ENCODE measurements at regions of chr6 and their contacts with region 1.

Region 1: GRCh38 chr6:53437557-53438202 is 88.9 kb upstream of the ELOVL5 start:
- DNase-seq: peak; percentile 38 to 77 (median 73)
- H3K4me3 ChIP-seq: no peak overlapping the region
- H3K4me3 Mint-ChIP-seq: no peak overlapping the region
- H3K27ac ChIP-seq: peak overlapping the region in 1 of 2 donors; percentile 69
- H3K27ac Mint-ChIP-seq: peak overlapping the region; percentile 25 to 92 (median 53)
- H3K4me1 ChIP-seq: peaks cover 46 to 55% of the 10 kb centered on the region in 2 donors
- H3K4me1 Mint-ChIP-seq: peaks cover 52% of the 10 kb centered on the region
- H3K27me3 ChIP-seq: no peaks in the 10 kb centered on the region
- H3K27me3 Mint-ChIP-seq: peaks cover 0 to 1% (median 0%) of the 10 kb centered on the region in 3 donors
- CTCF ChIP-seq: peak; percentile 67

Region 2: DNA sequence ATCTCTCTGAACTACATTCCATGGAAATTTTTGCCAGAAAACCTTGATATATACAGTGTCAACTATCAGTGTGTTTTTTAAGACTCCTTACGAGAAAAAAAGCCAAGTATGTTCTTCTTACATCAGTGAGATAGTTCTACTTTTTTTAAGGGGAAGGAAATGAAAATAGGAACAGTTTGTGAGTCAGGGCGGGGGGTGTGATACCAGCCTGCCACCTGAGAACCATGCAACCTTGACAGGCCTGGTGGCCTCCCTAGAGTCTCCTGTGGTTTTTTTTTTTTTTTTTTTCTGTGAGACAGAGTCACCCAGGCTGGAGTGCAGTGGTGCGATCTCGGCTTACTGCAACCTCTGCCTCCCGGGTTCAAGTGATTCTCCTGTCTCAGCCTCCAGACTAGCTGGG is 192.7 kb before region 1 on chr6:
- intact Hi-C with region 1: loop called in 1 of 2 experiments (anchors 10 kb)
- DNase-seq: peak; percentile 84 to 88 (median 87)
- H3K4me3 ChIP-seq: peak overlapping the region in 1 of 3 experiments; percentile 44
- H3K4me3 Mint-ChIP-seq: peak overlapping the region in 1 of 2 donors; percentile 53
- H3K27ac ChIP-seq: peak overlapping the region; percentile 79 to 86
- H3K27ac Mint-ChIP-seq: peak overlapping the region; percentile 87 to 97 (median 94)
- H3K4me1 ChIP-seq: peaks cover 57 to 60% of the 10 kb centered on the region in 2 donors
- H3K4me1 Mint-ChIP-seq: peaks cover 72% of the 10 kb centered on the region
- H3K27me3 ChIP-seq: no peaks in the 10 kb centered on the region
- H3K27me3 Mint-ChIP-seq: peaks cover 0 to 2% (median 1%) of the 10 kb centered on the region in 3 donors
- CTCF ChIP-seq: no peak

Region 3: GRCh38 chr6:53359072-53359842 is 78.4 kb before region 1 on chr6:
- intact Hi-C with region 1: loop called (anchors 5 to 10 kb)
- DNase-seq: peak; percentile 88 to 95 (median 94)
- H3K4me3 ChIP-seq: peak overlapping the region; percentile 56 to 85 (median 70)
- H3K4me3 Mint-ChIP-seq: peak overlapping the region; percentile 90 to 96
- H3K27ac ChIP-seq: peak overlapping the region; percentile 82 to 93
- H3K27ac Mint-ChIP-seq: peak overlapping the region; percentile 93 to 98 (median 97)
- H3K4me1 ChIP-seq: peaks cover 17 to 22% of the 10 kb centered on the region in 2 donors
- H3K4me1 Mint-ChIP-seq: peaks cover 27% of the 10 kb centered on the region
- H3K27me3 ChIP-seq: no peaks in the 10 kb centered on the region
- H3K27me3 Mint-ChIP-seq: peaks cover 0 to 7% (median 7%) of the 10 kb centered on the region in 3 donors
- CTCF ChIP-seq: no peak

Region 4: GRCh38 chr6:53484476-53485280 is 47.0 kb after region 1 on chr6:
- intact Hi-C with region 1: loop called in 1 of 2 experiments (anchors 10 kb)
- DNase-seq: peak; percentile 60 to 77 (median 68)
- H3K4me3 ChIP-seq: no peak overlapping the region
- H3K4me3 Mint-ChIP-seq: peak overlapping the region in 1 of 2 donors; percentile 67
- H3K27ac ChIP-seq: no peak overlapping the region
- H3K27ac Mint-ChIP-seq: no peak overlapping the region
- H3K4me1 ChIP-seq: peaks cover 31 to 37% of the 10 kb centered on the region in 2 donors
- H3K4me1 Mint-ChIP-seq: peaks cover 40% of the 10 kb centered on the region
- H3K27me3 ChIP-seq: peaks cover 0 to 3% of the 10 kb centered on the region in 2 donors
- H3K27me3 Mint-ChIP-seq: peaks cover 3 to 13% (median 9%) of the 10 kb centered on the region in 3 donors
- CTCF ChIP-seq: peak; percentile 97